AG04450 (cell line): ENCODE measurements at regions of chr3 and their contacts with region 1.

Region 1: GRCh38 chr3:88113311-88114162 is 36.2 kb upstream of the C3orf38 start:
- DNase-seq: peak; percentile 42
- H3K4me3 ChIP-seq: no peak overlapping the region
- H3K27ac ChIP-seq: no peak overlapping the region
- H3K27me3 ChIP-seq: no peaks in the 10 kb centered on the region
- CTCF ChIP-seq: peak; percentile 84

Region 2: DNA sequence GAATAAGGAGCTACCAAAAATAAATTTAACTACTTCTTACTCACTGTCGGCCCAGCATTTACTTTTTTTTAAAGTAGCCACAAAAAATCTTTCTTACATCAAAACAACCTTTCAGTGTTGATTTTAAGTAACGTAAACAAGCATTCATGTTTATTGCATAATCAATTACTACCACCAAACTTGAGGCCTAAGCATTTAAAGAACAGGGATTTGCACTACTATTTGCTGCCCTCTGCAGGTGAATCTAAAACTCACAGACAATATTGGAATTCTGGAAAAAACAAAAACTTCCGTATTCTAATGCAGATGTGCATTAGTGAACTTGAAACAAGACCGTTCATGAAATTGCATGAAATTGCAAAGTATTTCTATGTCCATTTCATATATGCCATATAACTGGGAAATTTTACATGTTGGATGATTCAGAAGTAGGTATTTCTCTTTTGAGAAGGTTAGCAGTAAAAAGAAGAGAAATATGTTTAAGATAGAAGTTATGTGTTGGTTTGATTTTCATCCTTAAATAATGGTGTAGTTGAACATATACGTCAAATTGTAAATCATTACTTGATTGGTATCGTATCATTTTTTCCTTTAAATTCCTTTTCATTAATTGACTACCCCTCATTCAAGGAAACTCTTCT is 110.3 kb before region 1 on chr3:
- CTCF ChIA-PET with region 1: interaction called, 20 read pairs
- POLR2A ChIA-PET with region 1: no interaction called
- DNase-seq: peak; percentile 8
- H3K4me3 ChIP-seq: no peak overlapping the region
- H3K27ac ChIP-seq: no peak overlapping the region
- H3K27me3 ChIP-seq: no peaks in the 10 kb centered on the region
- CTCF ChIP-seq: peak; percentile 78

Region 3: DNA sequence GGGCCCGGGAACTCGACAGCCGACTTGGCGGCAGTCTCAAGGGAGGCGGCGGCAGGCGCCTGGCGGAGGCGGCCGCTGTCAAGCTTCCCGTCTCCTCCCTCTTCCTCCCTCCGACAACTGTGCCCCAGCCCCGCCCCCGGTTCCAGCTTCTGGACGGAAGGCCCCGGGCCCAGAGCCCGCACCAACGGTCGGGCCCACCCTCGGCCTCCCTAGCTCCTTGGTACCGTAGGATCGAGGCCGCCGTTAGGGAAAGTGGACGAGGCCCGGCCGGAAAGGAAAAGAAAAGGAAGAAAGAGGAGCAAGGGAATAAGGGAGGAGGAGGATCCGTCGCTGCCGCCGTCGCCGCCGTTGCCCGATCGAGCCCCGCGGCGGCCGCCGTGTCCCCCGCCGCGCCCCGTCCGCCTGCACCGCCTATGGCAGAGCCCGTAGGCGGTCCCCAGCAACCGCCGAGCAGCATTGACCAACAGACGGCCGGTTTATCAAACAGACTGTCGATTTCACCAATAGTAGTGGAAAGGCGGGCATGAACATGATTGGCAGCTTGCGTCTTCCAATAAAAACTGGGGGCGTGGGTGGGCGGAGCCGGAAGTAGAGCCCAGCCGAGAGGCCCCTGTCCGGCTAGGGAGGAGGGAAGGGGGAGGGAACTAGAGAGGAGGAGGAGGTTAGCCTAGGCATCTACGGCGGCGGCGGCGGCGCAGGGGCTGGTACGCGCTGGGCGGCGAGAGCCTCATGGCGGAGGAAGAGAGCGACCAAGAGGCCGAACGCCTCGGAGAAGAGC is 54.8 kb before region 1 on chr3 and contains the starts of genes CGGBP1 and ZNF654:
- CTCF ChIA-PET with region 1: interaction called, 20 read pairs
- POLR2A ChIA-PET with region 1: interaction called, 4 read pairs
- DNase-seq: peak; percentile 97
- H3K4me3 ChIP-seq: peak within 1 kb of the TSS; percentile 95
- H3K27ac ChIP-seq: peak within 1 kb of the TSS; percentile 90
- H3K27me3 ChIP-seq: no peaks in the 10 kb centered on the region
- CTCF ChIP-seq: no peak
- polyA plus RNA-seq, gene CGGBP1: 88.1 and 109 TPM in 2 replicates
- polyA plus RNA-seq, gene ZNF654: 5.2 and 6.7 TPM in 2 replicates

Region 4: DNA sequence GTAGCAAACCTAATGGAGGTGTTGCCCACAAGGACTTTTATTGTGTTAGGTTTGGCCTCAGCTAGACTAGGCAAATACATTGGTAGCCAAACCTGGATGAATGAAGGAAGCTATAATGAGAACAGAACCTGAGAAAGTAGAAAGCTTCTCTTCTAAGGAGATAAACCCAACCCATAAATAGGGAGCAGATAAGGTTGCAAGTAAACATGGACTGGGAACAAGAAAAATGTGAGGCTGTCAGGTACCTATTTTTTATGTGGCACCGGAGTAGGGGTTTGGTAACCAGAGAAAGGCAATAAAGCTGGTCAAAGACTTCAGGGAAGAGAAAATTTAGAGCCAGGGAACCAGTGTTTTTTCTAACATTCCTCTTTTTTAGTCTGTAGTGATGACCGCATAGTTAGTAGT is 29.4 kb before region 1 on chr3:
- CTCF ChIA-PET with region 1: interaction called, 39 read pairs
- POLR2A ChIA-PET with region 1: no interaction called
- DNase-seq: no peak
- H3K4me3 ChIP-seq: no peak overlapping the region
- H3K27ac ChIP-seq: no peak overlapping the region
- H3K27me3 ChIP-seq: no peaks in the 10 kb centered on the region
- CTCF ChIP-seq: no peak

Region 5: GRCh38 chr3:88093266-88093665 is 20.3 kb before region 1 on chr3:
- CTCF ChIA-PET with region 1: interaction called, 39 read pairs
- POLR2A ChIA-PET with region 1: no interaction called
- DNase-seq: no peak
- H3K4me3 ChIP-seq: no peak overlapping the region
- H3K27ac ChIP-seq: no peak overlapping the region
- H3K27me3 ChIP-seq: no peaks in the 10 kb centered on the region
- CTCF ChIP-seq: no peak

Region 6: DNA sequence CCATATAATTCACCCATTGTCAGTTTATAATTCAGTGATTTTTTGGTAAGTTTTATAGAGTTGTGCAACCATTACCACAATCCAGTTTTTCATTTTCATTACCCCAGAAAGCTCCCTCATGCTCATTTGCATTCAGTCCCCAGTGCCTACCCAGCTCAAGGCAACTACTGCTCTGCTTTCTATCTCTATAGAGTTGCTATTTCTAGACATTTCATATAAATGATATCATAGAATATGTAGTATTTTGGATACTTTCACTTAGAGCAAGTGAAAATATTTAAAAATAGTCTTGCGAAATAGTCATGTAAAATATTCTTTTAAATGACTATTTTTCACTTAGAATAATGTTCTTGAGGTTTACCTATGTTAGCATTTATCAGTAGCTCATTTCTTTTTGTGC is 12.4 kb before region 1 on chr3:
- CTCF ChIA-PET with region 1: interaction called, 13 read pairs
- POLR2A ChIA-PET with region 1: no interaction called
- DNase-seq: no peak
- H3K4me3 ChIP-seq: no peak overlapping the region
- H3K27ac ChIP-seq: no peak overlapping the region
- H3K27me3 ChIP-seq: no peaks in the 10 kb centered on the region
- CTCF ChIP-seq: no peak

Region 7: DNA sequence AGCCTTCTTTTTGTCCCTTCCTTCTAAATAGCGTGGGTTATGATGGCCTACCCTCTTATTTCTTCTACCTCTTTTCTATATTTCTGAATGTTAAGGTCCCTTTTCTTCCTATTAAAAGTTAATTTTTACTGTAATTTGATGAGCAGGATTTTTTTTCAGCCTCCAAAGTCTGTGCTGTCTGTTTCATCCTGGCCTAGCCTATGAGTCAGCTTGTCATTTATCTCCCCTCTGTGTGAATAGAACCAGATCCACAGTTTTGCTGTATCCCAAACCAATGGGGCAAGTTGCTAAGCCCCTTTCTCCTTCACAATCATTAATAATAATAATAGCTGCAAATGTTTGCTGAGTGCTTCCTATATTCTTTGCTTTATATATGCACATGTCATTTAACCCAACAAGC is 18.2 kb after region 1 on chr3:
- CTCF ChIA-PET with region 1: interaction called, 25 read pairs
- POLR2A ChIA-PET with region 1: no interaction called
- DNase-seq: no peak
- H3K4me3 ChIP-seq: no peak overlapping the region
- H3K27ac ChIP-seq: no peak overlapping the region
- H3K27me3 ChIP-seq: no peaks in the 10 kb centered on the region
- CTCF ChIP-seq: no peak